Body of pancreas (tissue), 4 donors: ENCODE measurements at regions of chr11 and their contacts with region 1.

Region 1: DNA sequence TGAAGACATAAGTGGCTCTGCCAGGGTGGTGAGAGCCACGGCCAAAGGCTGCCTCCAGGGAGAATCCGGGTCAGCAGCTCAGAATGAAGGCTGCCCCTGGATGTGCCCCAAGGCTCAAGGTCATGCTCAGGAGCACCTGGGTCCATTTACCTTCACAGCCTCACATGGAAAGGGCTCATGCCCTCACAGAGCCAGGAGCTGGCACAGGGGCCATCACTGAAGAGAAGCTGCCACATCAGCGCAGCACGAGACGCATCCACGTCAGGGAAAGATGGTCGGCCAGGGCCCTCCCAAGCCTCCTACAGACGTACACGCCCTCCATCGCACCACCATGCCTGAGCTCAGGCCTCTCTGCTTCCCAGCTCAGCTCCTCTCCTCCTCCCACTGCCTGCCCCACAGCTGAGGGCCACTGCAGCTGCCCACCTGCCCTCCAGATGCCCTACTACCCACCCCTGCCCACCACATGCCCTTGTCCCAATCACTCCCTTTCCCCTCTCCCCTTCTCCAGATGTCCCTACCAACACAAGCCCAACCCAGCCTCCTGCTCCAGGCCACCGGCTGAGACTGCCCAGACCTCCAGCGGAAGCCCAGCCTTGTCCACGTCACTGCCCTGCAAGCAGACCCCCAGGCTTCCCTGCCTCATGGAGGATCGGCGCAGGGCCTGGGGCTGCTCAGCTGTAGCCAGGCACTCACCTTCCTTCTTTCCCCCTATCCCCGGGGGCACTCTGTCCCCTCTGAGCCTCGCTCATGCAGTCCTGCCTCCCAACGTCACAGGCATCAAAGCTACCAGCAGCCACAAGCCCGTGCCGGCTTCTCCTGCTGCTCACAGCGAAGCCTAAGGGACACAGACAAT is 144.1 kb downstream of the SHANK2 start:
- DNase-seq: no peak
- ATAC-seq: no peak
- H3K4me3 ChIP-seq: no peak overlapping the region
- H3K27ac ChIP-seq: no peak overlapping the region
- H3K4me1 ChIP-seq: no peaks in the 10 kb centered on the region
- H3K27me3 ChIP-seq: no peaks in the 10 kb centered on the region
- CTCF ChIP-seq: no peak
- POLR2A ChIP-seq: peak in 1 of 3 donors; percentile 9

Region 2: GRCh38 chr11:70712471-70712870 is 395.8 kb before region 1 on chr11:
- intact Hi-C with region 1: no loop called
- DNase-seq: no peak
- ATAC-seq: peak; percentile 30
- H3K4me3 ChIP-seq: no peak overlapping the region
- H3K27ac ChIP-seq: no peak overlapping the region
- H3K4me1 ChIP-seq: no peaks in the 10 kb centered on the region
- H3K27me3 ChIP-seq: no peaks in the 10 kb centered on the region
- CTCF ChIP-seq: no peak
- POLR2A ChIP-seq: no peak

Region 3: GRCh38 chr11:71433648-71434450 is 325.6 kb after region 1 on chr11:
- intact Hi-C with region 1: loop called (anchors 5 kb)
- DNase-seq: peak in 2 of 4 donors; percentile 27 to 35
- ATAC-seq: no peak
- H3K4me3 ChIP-seq: no peak overlapping the region
- H3K27ac ChIP-seq: no peak overlapping the region
- H3K4me1 ChIP-seq: no peaks in the 10 kb centered on the region
- H3K27me3 ChIP-seq: no peaks in the 10 kb centered on the region
- CTCF ChIP-seq: no peak
- POLR2A ChIP-seq: no peak